PC-3 (cell line): ENCODE measurements at regions of chr9 and their contacts with region 1.

Region 1: DNA sequence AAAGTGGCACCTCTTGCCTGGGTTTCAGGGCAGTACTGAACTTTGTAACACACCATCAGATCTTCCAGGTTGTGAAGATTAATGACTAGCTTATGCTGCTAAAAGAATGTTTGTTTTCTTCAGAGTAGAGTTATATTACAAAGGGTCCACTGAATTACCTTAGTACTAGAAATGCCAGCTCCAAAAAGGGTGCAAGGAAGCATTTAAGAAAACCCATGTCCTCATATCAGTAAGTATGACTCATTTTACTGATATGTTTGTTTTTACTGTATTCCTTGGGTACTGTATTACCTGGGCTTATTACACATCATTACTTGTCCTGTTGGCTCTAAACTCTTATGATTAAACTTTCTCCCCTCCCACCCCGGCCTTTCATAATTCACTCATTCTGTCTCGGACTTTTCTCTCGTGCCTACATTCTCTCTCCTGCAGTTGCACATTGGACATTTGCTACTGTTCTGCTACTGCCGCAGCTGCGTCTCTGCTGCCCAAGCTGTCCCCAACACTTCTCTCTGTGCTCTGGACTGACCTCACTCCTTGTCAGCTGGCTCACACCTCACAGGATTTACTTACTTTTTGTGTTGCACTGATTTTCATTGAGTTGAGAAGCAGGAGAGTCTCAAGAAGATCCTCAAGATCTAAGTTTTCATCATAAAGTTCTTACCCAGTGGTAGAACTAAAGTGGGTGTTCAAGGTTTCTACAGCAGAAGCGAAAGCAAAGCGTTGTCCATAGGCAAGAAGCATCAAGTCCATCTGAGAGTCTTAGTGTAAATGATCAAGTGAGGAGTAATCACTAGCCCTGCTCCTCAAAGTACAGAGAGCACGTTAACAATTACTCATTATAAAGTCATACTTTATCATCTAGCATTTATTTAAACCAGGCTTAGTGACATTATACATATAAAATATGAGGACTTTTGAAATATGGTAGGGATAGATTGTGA is 53.2 kb upstream of the C9orf72 start:
- DNase-seq: peak; percentile 83
- ATAC-seq: peak; percentile 76
- H3K4me3 ChIP-seq: peak overlapping the region; percentile 68
- H3K27ac ChIP-seq: peak overlapping the region; percentile 97
- H3K4me1 ChIP-seq: peaks cover 46% of the 10 kb centered on the region
- H3K27me3 ChIP-seq: no peaks in the 10 kb centered on the region
- CTCF ChIP-seq: no peak

Region 2: GRCh38 chr9:27460226-27461023 is 166.1 kb before region 1 on chr9:
- CTCF ChIA-PET with region 1: no interaction called
- POLR2A ChIA-PET with region 1: no interaction called
- intact Hi-C with region 1: no loop called
- DNase-seq: peak; percentile 81
- ATAC-seq: peak; percentile 95
- H3K4me3 ChIP-seq: no peak overlapping the region
- H3K27ac ChIP-seq: peak overlapping the region; percentile 89
- H3K4me1 ChIP-seq: peaks cover 20% of the 10 kb centered on the region
- H3K27me3 ChIP-seq: no peaks in the 10 kb centered on the region
- CTCF ChIP-seq: no peak

Region 3: DNA sequence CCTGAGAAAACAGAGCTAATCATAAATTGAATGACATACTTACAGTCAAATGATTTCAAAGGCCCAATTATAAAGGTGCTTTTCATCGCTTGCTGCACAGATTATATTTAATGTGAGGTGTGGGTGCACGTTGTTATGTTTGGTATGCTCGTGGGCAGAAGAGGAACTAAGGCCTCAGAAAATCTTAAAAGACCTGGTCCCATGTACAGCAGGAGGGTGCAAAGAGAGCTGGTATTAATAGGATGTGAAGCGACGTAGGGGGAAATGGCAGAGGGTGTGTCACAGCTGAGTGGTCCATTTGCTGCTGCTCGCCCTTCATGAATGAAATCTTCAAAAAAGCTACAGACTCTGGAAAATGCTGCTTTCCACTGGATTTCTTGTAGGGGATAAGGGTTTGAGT is 142.9 kb before region 1 on chr9:
- CTCF ChIA-PET with region 1: no interaction called
- POLR2A ChIA-PET with region 1: no interaction called
- intact Hi-C with region 1: no loop called
- DNase-seq: no peak
- ATAC-seq: no peak
- H3K4me3 ChIP-seq: no peak overlapping the region
- H3K27ac ChIP-seq: no peak overlapping the region
- H3K4me1 ChIP-seq: no peaks in the 10 kb centered on the region
- H3K27me3 ChIP-seq: no peaks in the 10 kb centered on the region
- CTCF ChIP-seq: no peak

Region 4: GRCh38 chr9:27573634-27574590 is 52.6 kb before region 1 on chr9:
- CTCF ChIA-PET with region 1: no interaction called
- POLR2A ChIA-PET with region 1: interaction called, 6 read pairs
- intact Hi-C with region 1: loop called (anchors 1 kb)
- DNase-seq: peak; percentile 97
- ATAC-seq: peak; percentile 69
- H3K4me3 ChIP-seq: peak overlapping the region; percentile 89
- H3K27ac ChIP-seq: peak overlapping the region; percentile 86
- H3K4me1 ChIP-seq: peaks cover 35% of the 10 kb centered on the region
- H3K27me3 ChIP-seq: no peaks in the 10 kb centered on the region
- CTCF ChIP-seq: no peak

Region 5: DNA sequence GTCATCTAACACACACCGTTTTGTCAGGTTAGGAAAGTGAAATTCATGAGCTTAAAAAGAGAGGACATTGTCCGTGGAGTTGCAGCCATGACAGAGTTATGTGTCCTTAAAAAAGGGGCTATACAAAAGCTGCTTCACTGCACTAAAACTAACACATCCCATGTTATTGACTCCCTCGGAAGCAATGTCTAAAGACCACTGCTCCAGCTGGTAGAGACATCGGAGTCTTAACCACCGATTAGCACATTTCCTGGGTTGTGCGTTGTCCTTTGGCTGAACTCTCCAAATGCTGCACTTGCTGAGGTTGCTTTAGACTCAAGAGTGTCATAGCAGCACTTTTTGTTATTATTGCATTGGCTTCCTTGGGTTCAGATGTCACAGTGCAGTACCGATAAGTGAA is 75.1 kb after region 1 on chr9:
- CTCF ChIA-PET with region 1: no interaction called
- POLR2A ChIA-PET with region 1: no interaction called
- intact Hi-C with region 1: loop called (anchors 5 kb)
- DNase-seq: peak; percentile 51
- ATAC-seq: peak; percentile 50; the same call in 1 of the 2 replicates
- H3K4me3 ChIP-seq: peak overlapping the region; percentile 43
- H3K27ac ChIP-seq: no peak overlapping the region
- H3K4me1 ChIP-seq: peaks cover 12% of the 10 kb centered on the region
- H3K27me3 ChIP-seq: no peaks in the 10 kb centered on the region
- CTCF ChIP-seq: no peak